Activated B cell treated with CpG ODN at 0.5 μM for 24 hours (primary cell): ENCODE measurements at regions of chr20 and their contacts with region 1.

Region 1: DNA sequence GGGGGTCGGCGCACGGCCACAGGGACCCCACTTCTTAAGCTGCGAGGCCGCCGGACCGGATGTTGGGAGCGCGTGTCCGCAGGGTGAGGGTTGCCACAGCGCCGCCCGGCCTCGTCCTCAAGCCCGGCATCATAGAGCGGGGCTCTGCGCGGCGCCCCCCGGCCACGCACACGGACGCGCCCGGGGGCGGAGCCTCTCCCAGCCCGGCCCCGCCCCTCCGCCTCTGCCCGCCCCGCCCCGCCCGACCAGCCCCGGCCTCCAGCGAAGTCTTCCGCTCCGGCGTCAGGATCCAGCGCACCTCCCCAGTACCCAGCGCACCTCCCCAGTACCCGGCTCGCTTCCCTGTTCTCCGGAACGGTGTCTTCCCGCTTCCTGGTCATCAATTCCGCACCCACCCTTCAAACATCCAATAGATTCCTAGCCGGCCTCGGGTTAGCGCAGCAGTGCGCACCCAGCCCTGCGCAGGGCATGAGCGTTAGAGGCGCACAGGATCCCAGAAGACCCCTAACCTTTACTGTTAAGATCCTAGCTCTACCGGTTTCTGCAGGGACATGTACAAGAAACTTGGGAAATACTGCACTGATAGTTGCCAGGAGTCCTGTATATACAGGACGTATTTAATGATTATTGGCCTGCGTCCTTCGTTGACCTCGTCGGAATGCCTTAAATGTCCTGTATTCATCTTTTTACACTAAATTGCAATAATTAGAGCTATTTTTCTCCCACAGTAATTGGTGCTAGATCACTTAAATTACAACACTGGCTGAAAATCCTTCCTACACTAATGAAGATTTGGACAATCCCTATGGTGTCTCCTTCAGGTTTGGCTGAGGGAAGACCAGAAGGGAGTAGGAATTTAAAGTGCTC is 535 bp upstream of the DNAAF9 start:
- DNase-seq: peak; percentile 68
- ATAC-seq: peak; percentile 73
- H3K4me3 Mint-ChIP-seq: peak overlapping the region; percentile 96
- H3K27ac Mint-ChIP-seq: peak overlapping the region; percentile 91
- H3K4me1 Mint-ChIP-seq: peaks cover 21% of the 10 kb centered on the region
- H3K27me3 Mint-ChIP-seq: peaks cover 2% of the 10 kb centered on the region
- CTCF ChIP-seq: no peak

Region 2: GRCh38 chr20:3082306-3082951 is 325.6 kb before region 1 on chr20:
- CTCF ChIA-PET with region 1: no interaction called
- POLR2A ChIA-PET with region 1: no interaction called
- intact Hi-C with region 1: no loop called
- DNase-seq: no peak
- ATAC-seq: peak; percentile 45
- H3K4me3 Mint-ChIP-seq: peak overlapping the region; percentile 78
- H3K27ac Mint-ChIP-seq: no peak overlapping the region
- H3K4me1 Mint-ChIP-seq: peaks cover 17% of the 10 kb centered on the region
- H3K27me3 Mint-ChIP-seq: peaks cover 57% of the 10 kb centered on the region
- CTCF ChIP-seq: no peak

Region 3: GRCh38 chr20:3173610-3174441 is 234.2 kb before region 1 on chr20:
- CTCF ChIA-PET with region 1: no interaction called
- POLR2A ChIA-PET with region 1: no interaction called
- intact Hi-C with region 1: loop called (anchors 10 kb)
- DNase-seq: peak; percentile 93
- ATAC-seq: peak; percentile 32
- H3K4me3 Mint-ChIP-seq: peak overlapping the region; percentile 82
- H3K27ac Mint-ChIP-seq: no peak overlapping the region
- H3K4me1 Mint-ChIP-seq: peaks cover 16% of the 10 kb centered on the region
- H3K27me3 Mint-ChIP-seq: peaks cover 30% of the 10 kb centered on the region
- CTCF ChIP-seq: no peak

Region 4: DNA sequence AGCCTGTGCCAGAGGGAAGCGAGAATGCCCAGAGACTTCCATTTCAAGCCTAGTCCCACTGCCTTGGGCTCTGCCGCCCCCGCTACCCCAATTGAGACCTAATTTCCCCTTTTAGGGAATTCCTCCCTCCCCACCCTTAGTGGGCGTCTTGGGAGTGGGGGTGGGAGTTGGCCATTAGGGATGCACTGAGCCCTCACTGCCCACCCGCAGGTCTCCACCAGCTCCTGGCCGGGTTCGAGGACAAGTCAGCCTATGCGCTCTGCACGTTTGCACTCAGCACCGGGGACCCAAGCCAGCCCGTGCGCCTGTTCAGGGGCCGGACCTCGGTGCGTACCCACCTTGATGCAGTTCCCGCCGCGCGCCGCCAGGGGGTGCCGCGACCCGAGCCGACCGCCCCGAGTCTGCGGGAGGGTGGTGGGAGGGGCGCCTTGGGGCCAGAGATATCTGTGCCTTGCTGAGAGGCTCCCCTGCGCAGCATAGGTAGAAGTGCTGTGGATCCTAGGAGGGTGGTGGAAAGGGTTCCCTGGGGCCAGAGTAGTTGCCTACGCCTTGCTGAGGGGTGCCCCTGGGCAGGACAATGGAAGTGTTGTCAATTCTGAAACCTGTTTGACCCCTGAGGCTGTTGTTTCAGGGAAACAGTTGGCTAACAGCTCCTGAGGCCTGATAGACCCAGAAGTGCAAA is 189.6 kb before region 1 on chr20:
- CTCF ChIA-PET with region 1: no interaction called
- POLR2A ChIA-PET with region 1: no interaction called
- intact Hi-C with region 1: loop called (anchors 5 kb)
- DNase-seq: peak; percentile 69
- ATAC-seq: peak; percentile 86
- H3K4me3 Mint-ChIP-seq: no peak overlapping the region
- H3K27ac Mint-ChIP-seq: no peak overlapping the region
- H3K4me1 Mint-ChIP-seq: peaks cover 22% of the 10 kb centered on the region
- H3K27me3 Mint-ChIP-seq: no peaks in the 10 kb centered on the region
- CTCF ChIP-seq: no peak

Region 5: DNA sequence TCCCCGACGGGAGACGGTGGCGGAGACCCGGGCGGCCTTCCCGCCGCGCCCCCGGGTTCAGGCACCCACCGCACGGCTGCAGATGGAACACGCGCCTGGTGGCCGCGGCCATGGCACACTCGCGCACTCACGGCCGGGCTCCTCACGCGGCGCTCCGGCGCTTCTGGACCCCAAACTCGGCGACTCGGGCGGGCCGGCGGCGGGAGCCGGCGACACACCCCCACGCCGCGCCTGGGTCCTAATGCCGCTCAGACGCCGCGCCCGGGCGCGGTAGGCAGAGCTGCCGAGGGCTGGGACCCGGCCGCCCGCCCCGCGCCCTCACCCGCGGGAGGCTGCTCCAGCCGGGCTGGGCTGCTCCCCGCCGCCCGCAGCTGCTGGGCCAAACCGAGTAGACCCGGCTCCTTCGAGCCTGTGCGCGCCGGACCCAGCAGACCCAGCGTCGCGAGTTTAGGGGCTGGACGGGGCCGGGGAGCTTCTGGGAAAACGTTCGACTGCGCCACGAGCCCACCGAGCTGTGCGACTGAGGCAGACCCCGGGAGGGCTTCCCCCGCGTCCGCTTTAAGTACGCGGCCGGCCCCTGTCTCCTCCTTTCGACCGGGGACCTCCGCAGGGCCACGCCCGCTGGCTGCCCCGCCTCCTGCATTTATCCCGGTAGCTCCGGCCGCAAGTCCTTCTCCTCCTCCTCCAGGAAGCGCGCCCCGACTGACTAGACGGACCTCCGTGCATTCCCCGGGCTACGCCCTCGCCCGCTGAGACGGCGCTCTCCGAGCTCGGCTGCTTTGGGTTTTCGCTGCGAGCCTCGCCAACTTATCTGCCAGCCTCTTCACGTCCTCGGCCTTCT is 168.8 kb before region 1 on chr20 and contains the start of gene SLC4A11:
- CTCF ChIA-PET with region 1: no interaction called
- POLR2A ChIA-PET with region 1: no interaction called
- intact Hi-C with region 1: loop called (anchors 5 kb)
- DNase-seq: peak; percentile 45
- ATAC-seq: peak; percentile 72
- H3K4me3 Mint-ChIP-seq: peak within 1 kb of the TSS; percentile 89
- H3K27ac Mint-ChIP-seq: no peak within 1 kb of the TSS
- H3K4me1 Mint-ChIP-seq: peaks cover 7% of the 10 kb centered on the region
- H3K27me3 Mint-ChIP-seq: peaks cover 48% of the 10 kb centered on the region
- CTCF ChIP-seq: no peak
- total RNA-seq, gene SLC4A11: 0.58 and 0.88 TPM in 2 replicates

Region 6: GRCh38 chr20:3340443-3340842 is 67.6 kb before region 1 on chr20:
- CTCF ChIA-PET with region 1: no interaction called
- POLR2A ChIA-PET with region 1: no interaction called
- intact Hi-C with region 1: no loop called
- DNase-seq: no peak
- ATAC-seq: no peak
- H3K4me3 Mint-ChIP-seq: no peak overlapping the region
- H3K27ac Mint-ChIP-seq: no peak overlapping the region
- H3K4me1 Mint-ChIP-seq: no peaks in the 10 kb centered on the region
- H3K27me3 Mint-ChIP-seq: no peaks in the 10 kb centered on the region
- CTCF ChIP-seq: no peak

Region 7: DNA sequence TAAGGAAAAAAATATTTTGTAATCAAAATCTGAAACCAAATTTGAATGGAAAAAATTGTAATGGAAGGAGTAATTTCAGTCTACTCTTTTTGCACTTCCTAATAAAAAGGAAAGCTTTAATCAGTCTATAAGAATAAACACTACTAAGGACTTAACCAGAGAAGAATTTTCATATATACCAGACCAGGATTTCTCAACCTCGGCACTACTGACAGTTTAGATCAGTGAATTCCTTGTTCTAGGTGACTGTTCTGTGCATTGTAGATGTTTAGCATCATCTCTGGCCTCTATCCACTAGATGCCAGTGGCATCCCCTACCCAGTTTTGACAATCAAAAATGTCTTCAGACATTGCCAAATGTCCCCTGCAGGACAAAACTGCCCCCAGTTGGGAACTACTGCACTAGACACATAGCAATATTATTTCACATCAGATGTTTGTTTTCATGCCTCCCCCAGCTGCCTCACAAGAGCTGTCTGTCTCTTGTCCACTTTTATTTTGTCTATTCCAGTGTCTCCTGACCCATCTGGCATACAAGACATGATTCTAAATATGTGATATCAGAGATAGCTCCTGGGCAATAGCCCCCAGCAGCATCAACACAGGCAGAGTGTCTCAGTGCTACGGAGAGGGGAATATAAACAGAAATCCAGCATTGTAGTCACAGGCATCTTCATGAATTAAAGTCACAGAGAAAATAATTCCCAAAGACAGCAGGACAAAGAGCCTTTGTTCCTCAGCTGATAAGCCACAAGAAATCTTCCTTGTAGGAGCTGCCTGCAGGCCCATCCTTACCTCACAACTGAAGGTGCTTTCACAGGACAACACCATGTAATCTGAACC is 27.6 kb before region 1 on chr20:
- CTCF ChIA-PET with region 1: no interaction called
- POLR2A ChIA-PET with region 1: no interaction called
- intact Hi-C with region 1: no loop called
- DNase-seq: no peak
- ATAC-seq: no peak
- H3K4me3 Mint-ChIP-seq: no peak overlapping the region
- H3K27ac Mint-ChIP-seq: no peak overlapping the region
- H3K4me1 Mint-ChIP-seq: no peaks in the 10 kb centered on the region
- H3K27me3 Mint-ChIP-seq: no peaks in the 10 kb centered on the region
- CTCF ChIP-seq: no peak

Region 8: GRCh38 chr20:3470627-3471396 is 62.8 kb after region 1 on chr20 and contains the start of gene ATRN:
- CTCF ChIA-PET with region 1: no interaction called
- POLR2A ChIA-PET with region 1: interaction called, 8 read pairs
- intact Hi-C with region 1: loop called (anchors 1 kb)
- DNase-seq: peak; percentile 98
- ATAC-seq: peak; percentile 94
- H3K4me3 Mint-ChIP-seq: peak within 1 kb of the TSS; percentile 93
- H3K27ac Mint-ChIP-seq: peak within 1 kb of the TSS; percentile 64
- H3K4me1 Mint-ChIP-seq: peaks cover 32% of the 10 kb centered on the region
- H3K27me3 Mint-ChIP-seq: peaks cover 1% of the 10 kb centered on the region
- CTCF ChIP-seq: no peak
- total RNA-seq, gene ATRN: 11.5 and 13.0 TPM in 2 replicates

Region 9: DNA sequence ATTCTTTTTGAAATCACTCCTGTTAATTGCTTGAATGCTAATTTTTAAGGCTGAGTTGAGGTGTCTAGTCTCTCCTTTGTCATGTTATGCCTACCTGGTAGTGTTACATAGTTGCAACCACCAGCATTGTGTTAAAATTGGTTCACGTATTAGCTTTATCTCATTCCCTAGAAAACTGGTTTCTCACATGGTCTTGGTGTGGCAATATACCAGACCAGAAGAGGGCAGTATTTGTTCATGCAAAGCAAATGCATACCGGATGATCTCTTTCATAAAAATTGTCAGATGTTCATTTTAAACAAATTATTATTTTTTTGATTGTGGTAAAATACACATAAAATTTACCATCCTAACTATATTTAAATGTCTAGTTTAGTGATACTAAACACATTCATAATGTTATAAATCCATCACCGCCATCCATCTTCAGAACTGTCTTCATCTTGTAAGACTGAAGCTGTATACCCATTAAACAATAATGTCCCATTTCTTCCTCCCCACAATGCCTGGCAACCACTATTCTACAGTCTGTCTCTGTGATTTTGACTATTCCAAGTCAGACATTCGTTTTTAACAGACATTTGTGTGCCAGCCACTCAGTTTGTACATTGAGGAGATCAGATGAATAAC is 155.7 kb after region 1 on chr20:
- CTCF ChIA-PET with region 1: no interaction called
- POLR2A ChIA-PET with region 1: no interaction called
- intact Hi-C with region 1: loop called (anchors 10 kb)
- DNase-seq: no peak
- ATAC-seq: no peak
- H3K4me3 Mint-ChIP-seq: no peak overlapping the region
- H3K27ac Mint-ChIP-seq: no peak overlapping the region
- H3K4me1 Mint-ChIP-seq: peaks cover 9% of the 10 kb centered on the region
- H3K27me3 Mint-ChIP-seq: no peaks in the 10 kb centered on the region
- CTCF ChIP-seq: peak; percentile 32

Region 10: GRCh38 chr20:4014031-4014474 is 606.0 kb after region 1 on chr20:
- CTCF ChIA-PET with region 1: no interaction called
- POLR2A ChIA-PET with region 1: interaction called, 10 read pairs
- intact Hi-C with region 1: no loop called
- DNase-seq: no peak
- ATAC-seq: no peak
- H3K4me3 Mint-ChIP-seq: peak overlapping the region; percentile 83
- H3K27ac Mint-ChIP-seq: no peak overlapping the region
- H3K4me1 Mint-ChIP-seq: peaks cover 33% of the 10 kb centered on the region
- H3K27me3 Mint-ChIP-seq: peaks cover 2% of the 10 kb centered on the region
- CTCF ChIP-seq: no peak